Activated CD8-positive, alpha-beta T cell treated with anti-CD3 and anti-CD28 coated beads, Interleukin-2, amount 10 ng/mL, durations not matched to agents 7 days and 5 days (primary cell): ENCODE measurements at regions of chr18 and their contacts with region 1.

Region 1: DNA sequence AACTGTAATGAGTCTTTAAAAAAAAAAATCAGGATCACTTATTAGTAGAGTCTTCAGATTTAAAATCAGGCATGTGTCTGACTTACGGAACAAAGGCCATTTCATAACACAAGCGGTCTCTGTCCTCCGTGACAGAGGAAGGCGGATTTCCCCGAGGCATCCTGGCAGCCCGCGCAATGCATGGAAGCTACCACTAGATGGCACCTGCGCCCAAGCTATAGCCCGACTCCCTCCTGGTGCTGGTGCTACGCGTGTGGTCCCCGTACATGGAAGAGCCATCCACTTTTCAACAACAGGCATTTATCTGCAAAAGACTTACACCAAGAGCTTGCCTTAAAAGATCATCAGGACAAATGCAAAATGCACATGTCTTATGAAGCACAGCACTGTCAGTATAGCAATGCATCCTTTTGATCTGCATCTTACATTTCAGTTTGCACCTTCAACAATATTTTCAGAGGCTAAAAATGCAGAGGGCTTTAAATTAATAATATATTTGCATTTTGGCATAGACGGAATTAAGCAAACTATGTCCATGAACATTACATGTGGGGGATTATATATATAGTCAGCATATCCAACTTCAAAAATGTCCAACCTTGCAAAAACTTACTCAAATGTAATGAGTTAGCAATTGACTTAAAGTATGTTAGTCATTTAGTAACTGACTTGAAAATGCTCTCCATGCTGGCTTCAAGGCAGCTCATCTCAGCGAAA is 96.0 kb downstream of the ZNF516 start:
- DNase-seq: peak; percentile 81
- ATAC-seq: peak; percentile 91
- H3K4me3 Mint-ChIP-seq: no peak overlapping the region
- H3K27ac Mint-ChIP-seq: no peak overlapping the region
- H3K4me1 Mint-ChIP-seq: peaks cover 3% of the 10 kb centered on the region
- H3K27me3 Mint-ChIP-seq: peaks cover 5% of the 10 kb centered on the region

Region 2: DNA sequence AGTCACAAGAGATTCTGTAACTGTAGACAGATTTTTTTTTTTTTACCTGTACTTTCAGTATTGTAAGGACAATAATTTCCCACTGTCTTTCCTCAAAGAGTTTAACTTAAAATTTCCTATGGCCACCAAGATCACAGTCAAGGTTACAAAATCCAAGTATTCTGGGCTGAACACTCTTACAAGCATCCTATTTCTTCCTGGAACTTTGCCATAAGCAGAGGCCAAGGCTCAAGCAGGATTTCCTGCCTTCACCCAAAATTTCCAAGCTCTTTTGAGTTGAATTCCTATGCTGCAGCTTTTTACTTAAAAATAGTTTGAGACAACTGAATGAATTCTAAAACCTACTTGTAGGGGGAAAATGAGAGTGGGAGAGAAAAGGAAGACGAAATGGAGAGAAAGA is 203.5 kb before region 1 on chr18:
- CTCF ChIA-PET with region 1: no interaction called
- POLR2A ChIA-PET with region 1: no interaction called
- DNase-seq: no peak
- ATAC-seq: no peak
- H3K4me3 Mint-ChIP-seq: no peak overlapping the region
- H3K27ac Mint-ChIP-seq: no peak overlapping the region
- H3K4me1 Mint-ChIP-seq: no peaks in the 10 kb centered on the region
- H3K27me3 Mint-ChIP-seq: peaks cover 4% of the 10 kb centered on the region

Region 3: GRCh38 chr18:76354348-76354747 is 44.7 kb before region 1 on chr18:
- CTCF ChIA-PET with region 1: no interaction called
- POLR2A ChIA-PET with region 1: no interaction called
- DNase-seq: no peak
- ATAC-seq: no peak
- H3K4me3 Mint-ChIP-seq: no peak overlapping the region
- H3K27ac Mint-ChIP-seq: no peak overlapping the region
- H3K4me1 Mint-ChIP-seq: no peaks in the 10 kb centered on the region
- H3K27me3 Mint-ChIP-seq: no peaks in the 10 kb centered on the region

Region 4: GRCh38 chr18:76620321-76621170 is 221.5 kb after region 1 on chr18:
- CTCF ChIA-PET with region 1: interaction called, 12 read pairs
- POLR2A ChIA-PET with region 1: no interaction called
- DNase-seq: peak; percentile 66
- ATAC-seq: peak; percentile 86
- H3K4me3 Mint-ChIP-seq: peak overlapping the region; percentile 16
- H3K27ac Mint-ChIP-seq: peak overlapping the region; percentile 58
- H3K4me1 Mint-ChIP-seq: peaks cover 23% of the 10 kb centered on the region
- H3K27me3 Mint-ChIP-seq: peaks cover 34% of the 10 kb centered on the region

Region 5: GRCh38 chr18:76686737-76687262 is 287.7 kb after region 1 on chr18:
- CTCF ChIA-PET with region 1: interaction called, 13 read pairs
- POLR2A ChIA-PET with region 1: no interaction called
- DNase-seq: peak; percentile 41
- ATAC-seq: peak; percentile 55
- H3K4me3 Mint-ChIP-seq: no peak overlapping the region
- H3K27ac Mint-ChIP-seq: peak overlapping the region; percentile 48
- H3K4me1 Mint-ChIP-seq: peaks cover 18% of the 10 kb centered on the region
- H3K27me3 Mint-ChIP-seq: peaks cover 32% of the 10 kb centered on the region

Region 6: DNA sequence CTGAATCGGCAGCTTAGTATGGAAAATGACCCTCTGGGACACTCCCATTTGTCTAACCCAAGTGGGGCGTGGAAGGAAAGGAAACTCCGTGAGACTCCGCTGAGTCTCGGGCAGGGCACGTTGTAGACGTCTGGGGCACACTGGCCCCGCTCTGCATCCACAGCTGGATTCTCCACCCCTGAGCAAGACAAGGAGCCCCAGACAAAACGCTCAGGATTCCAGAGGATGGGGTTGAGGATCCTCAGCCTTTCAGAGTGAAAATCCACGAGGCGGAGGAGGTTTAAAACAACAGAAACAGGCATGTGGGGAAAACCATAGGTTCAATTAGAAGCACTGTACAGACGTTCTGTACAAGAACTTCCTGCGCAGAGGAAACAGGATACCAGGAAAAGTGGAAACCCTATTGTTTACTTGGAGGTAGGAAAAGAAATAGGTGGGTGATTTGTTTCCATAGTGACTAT is 298.4 kb after region 1 on chr18:
- CTCF ChIA-PET with region 1: interaction called, 11 read pairs
- POLR2A ChIA-PET with region 1: no interaction called
- DNase-seq: no peak
- ATAC-seq: no peak
- H3K4me3 Mint-ChIP-seq: no peak overlapping the region
- H3K27ac Mint-ChIP-seq: no peak overlapping the region
- H3K4me1 Mint-ChIP-seq: peaks cover 3% of the 10 kb centered on the region
- H3K27me3 Mint-ChIP-seq: peaks cover 48% of the 10 kb centered on the region

Region 7: GRCh38 chr18:76709659-76710645 is 310.9 kb after region 1 on chr18:
- CTCF ChIA-PET with region 1: interaction called, 42 read pairs
- POLR2A ChIA-PET with region 1: no interaction called
- DNase-seq: peak; percentile 74
- ATAC-seq: peak; percentile 88
- H3K4me3 Mint-ChIP-seq: no peak overlapping the region
- H3K27ac Mint-ChIP-seq: no peak overlapping the region
- H3K4me1 Mint-ChIP-seq: peaks cover 15% of the 10 kb centered on the region
- H3K27me3 Mint-ChIP-seq: peaks cover 10% of the 10 kb centered on the region